H1 (cell line): ENCODE measurements at regions of chr9 and their contacts with region 1.

Region 1: DNA sequence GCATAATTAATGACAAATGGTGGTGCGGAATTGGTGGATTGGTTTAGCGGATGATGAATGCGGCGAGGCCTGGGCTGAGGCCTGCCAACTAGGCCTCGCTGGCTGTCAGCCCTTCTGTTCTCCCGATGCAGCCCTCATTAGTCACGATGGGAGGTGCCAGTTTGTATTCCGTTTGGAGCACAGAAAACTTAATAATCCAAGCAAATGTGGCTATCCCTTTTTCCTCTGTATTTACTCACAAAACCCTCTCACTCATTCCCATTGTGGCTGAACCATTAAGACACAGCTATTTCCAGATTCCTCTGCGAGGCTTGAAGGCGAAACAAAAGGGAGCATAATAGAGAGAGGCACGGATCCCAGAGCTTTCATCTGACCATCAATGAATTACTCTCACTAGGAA is 114.3 kb downstream of the MVB12B start:
- DNase-seq: no peak
- H3K4me3 ChIP-seq: no peak overlapping the region
- H3K27ac ChIP-seq: no peak overlapping the region
- H3K4me1 ChIP-seq: 0 out of 7 replicates have a peak, but pooled peaks cover 0 to 3% (median 0%) of the 10 kb centered on the region in 4 experiments
- H3K27me3 ChIP-seq: no peaks in the 10 kb centered on the region
- CTCF ChIP-seq: no peak
- EP300 ChIP-seq: no peak
- POLR2A ChIP-seq: no peak
- RAD21 ChIP-seq: no peak

Region 2: DNA sequence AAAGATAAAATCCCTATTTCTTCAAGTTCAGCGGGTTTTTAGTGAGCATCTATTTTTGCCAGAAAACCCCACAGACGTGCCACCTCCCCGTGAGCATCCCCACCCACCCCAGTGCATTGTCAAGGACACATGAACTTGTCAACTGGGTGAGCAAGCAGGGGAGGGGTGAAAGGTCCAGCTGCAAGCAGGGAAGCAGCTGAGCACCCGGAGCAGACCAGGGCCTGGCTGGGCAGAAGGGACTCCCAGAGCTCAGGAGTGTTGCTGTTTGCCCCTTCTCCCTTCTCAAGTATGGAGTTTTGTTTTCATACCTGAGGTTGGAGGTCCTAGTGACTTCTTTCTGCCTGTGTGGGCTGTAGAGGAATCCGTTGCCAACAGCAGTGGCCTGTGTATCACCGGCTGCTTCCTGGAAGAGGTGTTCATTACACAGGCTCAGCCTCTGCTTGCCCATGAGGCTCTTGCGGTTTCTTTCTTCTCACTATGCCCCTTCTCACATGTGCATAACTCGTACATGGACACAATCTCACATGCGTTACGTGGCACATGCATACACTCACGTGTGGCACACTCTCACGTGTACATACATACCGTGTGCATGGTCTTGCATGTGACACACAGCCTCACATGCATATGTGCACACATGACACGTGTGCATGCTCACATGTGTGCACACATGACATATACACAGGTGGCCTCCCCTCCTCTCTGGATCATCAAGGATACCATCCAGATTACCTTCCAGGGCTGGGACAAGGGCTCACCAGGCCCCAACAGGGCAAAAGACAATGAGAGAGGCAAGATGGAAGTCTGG is 12.4 kb after region 1 on chr9:
- CTCF ChIA-PET with region 1: interaction called, 11 read pairs
- POLR2A ChIA-PET with region 1: no interaction called
- DNase-seq: no peak
- H3K4me3 ChIP-seq: no peak overlapping the region
- H3K27ac ChIP-seq: no peak overlapping the region
- H3K4me1 ChIP-seq: peaks cover 0 to 4% (median 0%) of the 10 kb centered on the region in 4 experiments; a peak in 2 of 7 replicates
- H3K27me3 ChIP-seq: no peaks in the 10 kb centered on the region
- CTCF ChIP-seq: no peak
- EP300 ChIP-seq: no peak
- POLR2A ChIP-seq: no peak
- RAD21 ChIP-seq: no peak

Region 3: GRCh38 chr9:126465977-126466376 is 25.0 kb after region 1 on chr9:
- CTCF ChIA-PET with region 1: no interaction called
- POLR2A ChIA-PET with region 1: no interaction called
- DNase-seq: no peak
- H3K4me3 ChIP-seq: no peak overlapping the region
- H3K27ac ChIP-seq: no peak overlapping the region
- H3K4me1 ChIP-seq: peaks cover 0 to under 1% (median 0%) of the 10 kb centered on the region in 4 experiments; a peak in 1 of 7 replicates
- H3K27me3 ChIP-seq: no peaks in the 10 kb centered on the region
- CTCF ChIP-seq: no peak
- EP300 ChIP-seq: no peak
- POLR2A ChIP-seq: no peak
- RAD21 ChIP-seq: no peak

Region 4: DNA sequence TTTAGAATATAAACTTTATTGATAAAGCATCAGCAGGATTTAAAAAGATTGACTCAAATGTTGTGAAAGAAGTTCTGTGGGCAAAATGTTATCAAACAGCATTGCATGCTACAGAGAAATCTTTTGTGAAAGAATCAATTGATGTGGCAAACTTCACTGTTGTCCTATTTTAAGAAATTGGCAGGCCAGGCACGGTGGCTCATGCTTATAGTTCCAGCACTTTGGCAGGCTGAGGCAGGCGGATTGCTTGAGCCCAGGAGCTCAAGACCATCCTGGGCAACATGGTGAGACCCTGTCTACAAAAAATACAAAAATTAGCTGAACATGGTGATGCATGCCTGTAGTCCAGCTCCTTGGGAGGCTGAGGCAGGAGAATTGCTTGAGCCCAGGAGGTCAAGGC is 381.3 kb after region 1 on chr9:
- CTCF ChIA-PET with region 1: no interaction called
- POLR2A ChIA-PET with region 1: no interaction called
- DNase-seq: no peak
- H3K4me3 ChIP-seq: no peak overlapping the region
- H3K27ac ChIP-seq: no peak overlapping the region
- H3K4me1 ChIP-seq: no peaks in the 10 kb centered on the region
- H3K27me3 ChIP-seq: no peaks in the 10 kb centered on the region
- CTCF ChIP-seq: no peak
- EP300 ChIP-seq: no peak
- POLR2A ChIP-seq: no peak
- RAD21 ChIP-seq: no peak